ENCODE measurements at regions of chr17 and their contacts with region 1.

Region 1: GRCh38 chr17:66466840-66467367 is 164.5 kb downstream of the PRKCA start:
- DNase-seq: peak; percentile 88
- H3K4me3 Mint-ChIP-seq: peak overlapping the region; percentile 60
- H3K27ac Mint-ChIP-seq: peak overlapping the region; percentile 91
- H3K4me1 Mint-ChIP-seq: peaks cover 80% of the 10 kb centered on the region
- H3K27me3 Mint-ChIP-seq: no peaks in the 10 kb centered on the region

Region 2: GRCh38 chr17:65122836-65123756 is 1343.8 kb before region 1 on chr17:
- CTCF ChIA-PET with region 1: no interaction called
- POLR2A ChIA-PET with region 1: no interaction called
- intact Hi-C with region 1: loop called (anchors 5 kb)
- DNase-seq: peak; percentile 90
- H3K4me3 Mint-ChIP-seq: peak overlapping the region; percentile 78
- H3K27ac Mint-ChIP-seq: peak overlapping the region; percentile 90
- H3K4me1 Mint-ChIP-seq: peaks cover 23% of the 10 kb centered on the region
- H3K27me3 Mint-ChIP-seq: no peaks in the 10 kb centered on the region

Region 3: GRCh38 chr17:66073384-66073783 is 393.5 kb before region 1 on chr17:
- CTCF ChIA-PET with region 1: no interaction called
- POLR2A ChIA-PET with region 1: no interaction called
- intact Hi-C with region 1: no loop called
- DNase-seq: no peak
- H3K4me3 Mint-ChIP-seq: no peak overlapping the region
- H3K27ac Mint-ChIP-seq: no peak overlapping the region
- H3K4me1 Mint-ChIP-seq: peaks cover 21% of the 10 kb centered on the region
- H3K27me3 Mint-ChIP-seq: no peaks in the 10 kb centered on the region

Region 4: DNA sequence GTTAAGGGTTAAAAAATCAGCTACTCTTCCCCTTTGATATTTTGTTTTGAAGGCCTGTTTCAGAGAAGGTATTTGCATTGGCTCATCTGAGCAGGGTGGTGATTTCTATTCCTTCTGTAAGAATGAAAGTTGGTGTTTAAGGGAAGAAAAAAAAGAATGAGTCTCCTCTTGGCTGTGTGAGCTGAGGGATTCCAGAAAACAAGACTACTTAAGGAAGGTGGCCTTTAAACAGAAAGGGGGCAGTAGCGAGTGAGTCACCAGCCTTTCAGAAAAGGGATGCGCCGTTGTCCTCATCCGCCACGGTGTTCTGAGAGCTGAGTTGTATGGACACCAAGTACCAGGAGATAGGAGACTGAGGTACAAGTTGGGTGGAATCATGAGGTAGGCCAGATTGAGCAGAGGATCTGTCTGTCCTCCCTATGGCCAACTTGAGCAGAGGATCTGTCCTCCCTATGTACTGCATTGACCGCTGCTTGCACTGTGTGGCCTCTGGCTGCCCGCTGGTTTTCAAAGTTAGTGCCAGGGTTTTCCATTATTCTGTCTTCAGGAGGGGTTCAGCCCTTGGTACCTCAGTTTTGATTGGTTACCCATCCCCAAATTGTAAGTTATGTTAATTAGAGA is 156.3 kb before region 1 on chr17:
- CTCF ChIA-PET with region 1: interaction called, 3 read pairs
- POLR2A ChIA-PET with region 1: no interaction called
- intact Hi-C with region 1: loop called (anchors 2 kb)
- DNase-seq: peak; percentile 72
- H3K4me3 Mint-ChIP-seq: peak overlapping the region; percentile 13
- H3K27ac Mint-ChIP-seq: peak overlapping the region; percentile 88
- H3K4me1 Mint-ChIP-seq: peaks cover 93% of the 10 kb centered on the region
- H3K27me3 Mint-ChIP-seq: no peaks in the 10 kb centered on the region

Region 5: GRCh38 chr17:66348584-66349165 is 118.2 kb before region 1 on chr17:
- CTCF ChIA-PET with region 1: no interaction called
- POLR2A ChIA-PET with region 1: no interaction called
- intact Hi-C with region 1: no loop called
- DNase-seq: peak; percentile 58
- H3K4me3 Mint-ChIP-seq: no peak overlapping the region
- H3K27ac Mint-ChIP-seq: peak overlapping the region; percentile 47
- H3K4me1 Mint-ChIP-seq: peaks cover 78% of the 10 kb centered on the region
- H3K27me3 Mint-ChIP-seq: no peaks in the 10 kb centered on the region

Region 6: DNA sequence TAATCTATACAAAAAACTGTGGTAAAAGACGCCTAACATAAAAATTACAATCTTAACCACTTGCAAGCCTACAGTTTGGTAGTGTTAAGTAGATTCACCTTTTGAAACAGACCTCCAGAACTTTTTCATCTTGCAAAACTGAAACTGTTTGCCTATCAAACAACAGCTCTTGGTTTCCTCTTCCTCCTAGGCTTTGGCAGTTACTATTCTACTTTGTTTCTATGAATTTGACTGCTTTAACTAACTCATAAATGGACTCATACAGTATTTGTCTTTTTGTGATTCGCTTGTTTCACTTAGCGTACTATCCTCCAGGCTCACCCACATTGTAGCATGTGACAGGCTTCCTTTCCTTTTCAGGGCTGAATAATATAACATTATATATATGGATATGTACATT is 67.5 kb before region 1 on chr17:
- CTCF ChIA-PET with region 1: no interaction called
- POLR2A ChIA-PET with region 1: no interaction called
- intact Hi-C with region 1: loop called (anchors 1 kb)
- DNase-seq: peak; percentile 29
- H3K4me3 Mint-ChIP-seq: peak overlapping the region; percentile 35
- H3K27ac Mint-ChIP-seq: peak overlapping the region; percentile 82
- H3K4me1 Mint-ChIP-seq: peaks cover 83% of the 10 kb centered on the region
- H3K27me3 Mint-ChIP-seq: no peaks in the 10 kb centered on the region

Region 7: GRCh38 chr17:66491213-66491612 is 24.3 kb after region 1 on chr17:
- CTCF ChIA-PET with region 1: no interaction called
- POLR2A ChIA-PET with region 1: no interaction called
- intact Hi-C with region 1: loop called (anchors 2 kb)
- DNase-seq: peak; percentile 71
- H3K4me3 Mint-ChIP-seq: no peak overlapping the region
- H3K27ac Mint-ChIP-seq: peak overlapping the region; percentile 68
- H3K4me1 Mint-ChIP-seq: peaks cover 75% of the 10 kb centered on the region
- H3K27me3 Mint-ChIP-seq: no peaks in the 10 kb centered on the region

Region 8: DNA sequence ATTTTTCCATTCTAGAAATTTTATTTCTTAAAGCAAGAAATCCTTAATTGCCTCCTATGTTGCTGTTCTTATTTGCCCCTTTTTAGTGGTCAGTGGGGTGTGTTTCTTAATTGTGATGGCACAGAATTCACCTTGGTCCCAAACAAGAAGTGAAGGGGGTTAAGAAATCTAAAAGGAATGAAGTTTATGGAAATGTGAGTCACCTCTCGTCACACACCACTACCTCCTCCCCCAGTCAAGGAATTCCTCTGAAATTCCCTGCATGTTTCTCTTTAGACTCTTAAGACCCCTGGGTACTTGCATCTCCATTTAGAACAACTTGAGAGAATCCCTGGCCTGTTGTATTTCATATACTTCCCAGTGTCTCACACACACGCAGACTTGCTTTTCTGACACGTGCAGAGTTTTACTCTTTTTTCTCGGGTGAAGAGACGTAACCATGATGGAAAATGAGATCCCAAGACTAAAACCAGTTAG is 82.9 kb after region 1 on chr17:
- CTCF ChIA-PET with region 1: interaction called, 4 read pairs
- POLR2A ChIA-PET with region 1: interaction called, 6 read pairs
- intact Hi-C with region 1: loop called (anchors 1 kb)
- DNase-seq: no peak
- H3K4me3 Mint-ChIP-seq: no peak overlapping the region
- H3K27ac Mint-ChIP-seq: no peak overlapping the region
- H3K4me1 Mint-ChIP-seq: peaks cover 56% of the 10 kb centered on the region
- H3K27me3 Mint-ChIP-seq: no peaks in the 10 kb centered on the region

Region 9: GRCh38 chr17:66633317-66633965 is 166.5 kb after region 1 on chr17:
- CTCF ChIA-PET with region 1: no interaction called
- POLR2A ChIA-PET with region 1: no interaction called
- intact Hi-C with region 1: loop called (anchors 1 kb)
- DNase-seq: peak; percentile 70
- H3K4me3 Mint-ChIP-seq: no peak overlapping the region
- H3K27ac Mint-ChIP-seq: peak overlapping the region; percentile 61
- H3K4me1 Mint-ChIP-seq: peaks cover 55% of the 10 kb centered on the region
- H3K27me3 Mint-ChIP-seq: no peaks in the 10 kb centered on the region

Region 10: DNA sequence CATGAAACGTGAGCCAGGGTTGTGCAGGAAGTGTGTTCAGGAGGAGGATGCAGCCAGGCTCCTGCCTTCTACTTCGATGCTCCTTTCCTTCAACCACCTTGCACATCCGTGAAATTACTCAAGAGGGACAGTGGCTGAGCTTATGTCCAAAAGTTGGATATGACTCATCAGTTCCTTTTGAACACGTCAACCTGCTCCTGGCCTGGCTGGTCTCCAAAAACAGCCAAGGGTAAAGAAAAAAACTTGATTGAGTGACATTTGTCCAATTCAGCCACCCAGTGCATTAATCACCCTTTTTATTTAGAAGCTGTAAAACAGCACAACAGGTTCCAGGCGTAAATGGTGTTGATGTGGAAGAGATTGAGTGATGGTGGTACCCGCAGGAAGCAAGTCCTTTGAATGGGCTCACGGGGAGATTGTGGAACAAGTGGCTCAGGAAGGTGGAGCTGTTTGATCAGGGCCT is 194.5 kb after region 1 on chr17:
- CTCF ChIA-PET with region 1: no interaction called
- POLR2A ChIA-PET with region 1: no interaction called
- intact Hi-C with region 1: no loop called
- DNase-seq: peak; percentile 31
- H3K4me3 Mint-ChIP-seq: no peak overlapping the region
- H3K27ac Mint-ChIP-seq: no peak overlapping the region
- H3K4me1 Mint-ChIP-seq: peaks cover 60% of the 10 kb centered on the region
- H3K27me3 Mint-ChIP-seq: no peaks in the 10 kb centered on the region